Activated CD8-positive, alpha-beta T cell treated with anti-CD3 and anti-CD28 coated beads for 36 hours (primary cell): ENCODE measurements at regions of chr6 and their contacts with region 1.

Region 1: GRCh38 chr6:35452186-35453090 is at the start of gene FANCE:
- DNase-seq: peak; percentile 95
- ATAC-seq: peak; percentile 90
- H3K4me3 Mint-ChIP-seq: peak within 1 kb of the TSS; percentile 78
- H3K27ac Mint-ChIP-seq: peak within 1 kb of the TSS; percentile 39
- H3K4me1 Mint-ChIP-seq: peaks cover 36% of the 10 kb centered on the region
- H3K27me3 Mint-ChIP-seq: no peaks in the 10 kb centered on the region
- CTCF ChIP-seq: no peak
- total RNA-seq, gene FANCE: 18.8 to 19.4 TPM

Region 2: GRCh38 chr6:35311390-35312075 is 140.9 kb before region 1 on chr6:
- CTCF ChIA-PET with region 1: interaction called, 10 read pairs
- POLR2A ChIA-PET with region 1: no interaction called
- intact Hi-C with region 1: no loop called
- DNase-seq: peak; percentile 64
- ATAC-seq: peak; percentile 70
- H3K4me3 Mint-ChIP-seq: peak overlapping the region; percentile 57
- H3K27ac Mint-ChIP-seq: peak overlapping the region; percentile 96
- H3K4me1 Mint-ChIP-seq: peaks cover 87% of the 10 kb centered on the region
- H3K27me3 Mint-ChIP-seq: no peaks in the 10 kb centered on the region
- CTCF ChIP-seq: no peak

Region 3: GRCh38 chr6:35342258-35343091 is 110.0 kb before region 1 on chr6 and contains the start of gene PPARD:
- CTCF ChIA-PET with region 1: interaction called, 209 read pairs
- POLR2A ChIA-PET with region 1: interaction called, 13 read pairs
- intact Hi-C with region 1: loop called (anchors 1 kb)
- DNase-seq: peak; percentile 98
- ATAC-seq: peak; percentile 98
- H3K4me3 Mint-ChIP-seq: peak within 1 kb of the TSS; percentile 82
- H3K27ac Mint-ChIP-seq: peak within 1 kb of the TSS; percentile 91
- H3K4me1 Mint-ChIP-seq: peaks cover 40% of the 10 kb centered on the region
- H3K27me3 Mint-ChIP-seq: no peaks in the 10 kb centered on the region
- CTCF ChIP-seq: peak; percentile 95
- total RNA-seq, gene PPARD: 26.6 to 26.7 TPM

Region 4: GRCh38 chr6:35419417-35419816 is 33.0 kb before region 1 on chr6:
- CTCF ChIA-PET with region 1: interaction called, 43 read pairs
- POLR2A ChIA-PET with region 1: no interaction called
- intact Hi-C with region 1: no loop called
- DNase-seq: peak; percentile 44
- ATAC-seq: peak; percentile 32
- H3K4me3 Mint-ChIP-seq: no peak overlapping the region
- H3K27ac Mint-ChIP-seq: peak overlapping the region; percentile 87
- H3K4me1 Mint-ChIP-seq: peaks cover 35% of the 10 kb centered on the region
- H3K27me3 Mint-ChIP-seq: no peaks in the 10 kb centered on the region
- CTCF ChIP-seq: no peak

Region 5: DNA sequence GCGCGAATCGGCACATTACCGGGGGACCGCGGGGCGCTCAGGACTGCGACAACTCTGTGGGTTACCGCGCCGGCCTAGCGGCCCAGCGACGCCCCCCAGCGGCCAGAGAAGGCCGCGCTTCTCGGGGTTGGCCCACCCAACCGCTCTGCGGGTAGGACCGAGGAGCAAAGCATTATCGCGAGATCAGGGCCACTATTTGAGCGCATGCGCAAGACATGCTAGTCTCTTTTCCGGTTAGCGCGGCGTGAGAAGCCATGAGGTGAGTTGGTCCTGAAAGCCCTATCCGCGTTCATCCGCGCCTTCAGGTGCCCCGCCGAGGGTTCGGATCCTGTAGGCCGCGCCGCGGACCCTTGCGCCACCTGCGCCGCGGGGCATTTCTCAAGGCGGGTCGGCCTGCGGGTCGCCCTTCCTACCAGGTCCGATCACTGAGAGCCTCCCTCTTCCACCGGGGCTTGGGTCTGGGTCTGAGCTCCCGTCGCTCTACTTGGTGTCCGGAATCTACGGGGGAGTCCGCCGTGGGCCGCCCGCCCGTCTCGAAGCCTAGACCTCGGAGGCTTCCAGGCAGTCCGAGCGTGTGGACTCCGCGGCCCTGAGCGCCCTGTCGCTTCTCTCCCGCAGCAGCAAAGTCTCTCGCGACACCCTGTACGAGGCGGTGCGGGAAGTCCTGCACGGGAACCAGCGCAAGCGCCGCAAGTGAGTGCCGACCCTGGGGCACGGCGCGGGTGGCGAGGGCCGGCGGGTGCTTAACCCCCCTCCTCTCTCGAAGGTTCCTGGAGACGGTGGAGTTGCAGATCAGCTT is 15.9 kb after region 1 on chr6 and contains the start of gene RPL10A:
- CTCF ChIA-PET with region 1: interaction called, 35 read pairs
- POLR2A ChIA-PET with region 1: interaction called, 70 read pairs
- intact Hi-C with region 1: no loop called
- DNase-seq: peak; percentile 96
- ATAC-seq: peak; percentile 91
- H3K4me3 Mint-ChIP-seq: peak within 1 kb of the TSS; percentile 97
- H3K27ac Mint-ChIP-seq: peak within 1 kb of the TSS; percentile 98
- H3K4me1 Mint-ChIP-seq: peaks cover 38% of the 10 kb centered on the region
- H3K27me3 Mint-ChIP-seq: no peaks in the 10 kb centered on the region
- CTCF ChIP-seq: peak; percentile 85
- total RNA-seq, gene RPL10A: 2,322 to 2,393 TPM

Region 6: GRCh38 chr6:35601331-35602132 is 149.1 kb after region 1 on chr6:
- CTCF ChIA-PET with region 1: no interaction called
- POLR2A ChIA-PET with region 1: no interaction called
- intact Hi-C with region 1: no loop called
- DNase-seq: peak; percentile 76
- ATAC-seq: peak; percentile 71
- H3K4me3 Mint-ChIP-seq: peak overlapping the region; percentile 60
- H3K27ac Mint-ChIP-seq: peak overlapping the region; percentile 70
- H3K4me1 Mint-ChIP-seq: peaks cover 70% of the 10 kb centered on the region
- H3K27me3 Mint-ChIP-seq: no peaks in the 10 kb centered on the region
- CTCF ChIP-seq: no peak